Aorta (tissue), 5 donors: ENCODE measurements at regions of chr4 and their contacts with region 1.

Region 1: DNA sequence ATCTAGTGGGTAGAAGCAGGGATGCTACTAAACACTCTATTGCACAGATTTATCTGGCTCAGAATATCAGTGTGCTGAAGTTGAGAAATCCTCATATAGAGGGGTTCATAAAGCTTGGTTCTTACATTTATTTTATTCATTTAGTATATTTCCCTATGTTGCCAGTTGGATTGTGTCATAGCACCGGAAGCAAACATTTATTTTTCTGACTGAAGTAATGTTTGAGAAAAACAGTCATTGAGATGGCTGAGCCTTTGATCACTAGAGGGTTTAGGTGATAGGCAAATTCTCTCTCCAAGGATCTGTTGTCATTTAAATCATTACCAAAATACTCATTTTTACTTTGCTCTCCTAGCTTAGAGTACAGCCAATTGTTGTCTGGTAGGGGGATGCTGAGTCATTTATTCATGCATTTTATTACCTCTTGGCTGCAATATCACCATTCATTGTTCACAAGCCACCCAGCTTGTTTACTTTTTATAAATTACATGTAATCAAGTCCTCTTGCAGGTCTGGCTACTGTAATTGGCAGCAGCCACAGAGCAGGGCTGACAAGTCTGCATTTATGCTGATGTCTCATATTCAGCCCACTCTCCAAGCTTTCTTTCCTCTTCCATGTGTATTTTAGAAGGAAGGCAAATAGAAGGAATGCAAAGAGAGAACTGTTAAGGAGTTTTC is 15.2 kb downstream of the GAB1 start:
- DNase-seq: no peak
- ATAC-seq: no peak
- H3K4me3 ChIP-seq: no peak overlapping the region
- H3K27ac ChIP-seq: peak overlapping the region; percentile 17 to 22
- H3K4me1 ChIP-seq: peaks cover 9 to 21% of the 10 kb centered on the region in 2 donors
- H3K27me3 ChIP-seq: no peaks in the 10 kb centered on the region

Region 2: DNA sequence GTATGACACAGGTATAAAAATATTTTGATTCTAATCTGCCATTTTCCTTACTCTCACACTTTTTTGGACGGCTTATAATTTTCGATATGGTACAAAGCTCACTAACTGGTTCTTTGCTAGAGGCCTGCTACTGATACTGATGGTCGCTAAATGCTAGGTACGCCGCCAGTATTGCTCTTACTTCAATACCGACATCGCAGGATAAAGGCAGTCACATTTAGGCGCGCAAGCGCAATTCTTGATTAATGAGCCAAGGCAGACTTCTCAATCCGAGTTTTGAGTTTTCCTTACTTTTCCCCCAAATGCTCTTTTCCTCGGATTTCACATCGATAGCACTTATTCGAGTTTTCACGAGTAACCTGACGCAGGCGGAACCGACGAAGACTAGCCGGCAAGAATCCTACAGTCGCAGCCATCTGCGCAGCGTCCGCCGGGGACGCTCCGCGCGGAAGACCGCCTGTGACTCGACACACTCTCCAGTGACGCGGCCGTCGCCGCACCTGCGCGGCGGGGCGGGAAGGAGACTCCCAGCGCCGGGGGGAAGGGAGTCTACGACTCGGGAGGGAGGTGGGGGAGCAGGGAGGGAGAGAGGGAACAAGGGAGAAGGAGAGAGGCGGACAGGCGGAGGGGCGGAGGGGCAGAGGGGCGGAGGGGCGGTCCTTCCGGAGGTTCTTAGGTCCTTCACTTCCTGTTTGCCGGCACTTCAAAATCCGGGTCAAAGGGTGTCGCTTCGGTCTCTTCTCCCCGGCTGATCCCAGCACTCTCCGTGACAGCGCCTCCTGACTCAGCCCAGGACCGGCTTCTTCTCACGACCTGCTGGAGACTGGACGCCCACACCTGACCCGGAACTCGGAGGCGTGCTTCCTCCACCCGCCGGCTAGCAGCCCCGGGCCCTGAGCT is 167.4 kb before region 1 on chr4 and contains the start of gene USP38:
- intact Hi-C with region 1: no loop called
- DNase-seq: peak; percentile 92 to 95
- ATAC-seq: peak; percentile 99
- H3K4me3 ChIP-seq: peak within 1 kb of the TSS; percentile 94 to 96
- H3K27ac ChIP-seq: peak within 1 kb of the TSS; percentile 36 to 82
- H3K4me1 ChIP-seq: no peaks in the 10 kb centered on the region
- H3K27me3 ChIP-seq: no peaks in the 10 kb centered on the region
- total RNA-seq, gene USP38: 17.1 to 18.4 TPM

Region 3: GRCh38 chr4:143399113-143399949 is 47.4 kb after region 1 on chr4:
- intact Hi-C with region 1: loop called in 1 of 2 experiments (anchors 5 kb)
- DNase-seq: no peak
- ATAC-seq: no peak
- H3K4me3 ChIP-seq: no peak overlapping the region
- H3K27ac ChIP-seq: no peak overlapping the region
- H3K4me1 ChIP-seq: peaks cover 4 to 18% of the 10 kb centered on the region in 2 donors
- H3K27me3 ChIP-seq: no peaks in the 10 kb centered on the region